ENCODE measurements at regions of chr3 and their contacts with region 1.

Region 1: DNA sequence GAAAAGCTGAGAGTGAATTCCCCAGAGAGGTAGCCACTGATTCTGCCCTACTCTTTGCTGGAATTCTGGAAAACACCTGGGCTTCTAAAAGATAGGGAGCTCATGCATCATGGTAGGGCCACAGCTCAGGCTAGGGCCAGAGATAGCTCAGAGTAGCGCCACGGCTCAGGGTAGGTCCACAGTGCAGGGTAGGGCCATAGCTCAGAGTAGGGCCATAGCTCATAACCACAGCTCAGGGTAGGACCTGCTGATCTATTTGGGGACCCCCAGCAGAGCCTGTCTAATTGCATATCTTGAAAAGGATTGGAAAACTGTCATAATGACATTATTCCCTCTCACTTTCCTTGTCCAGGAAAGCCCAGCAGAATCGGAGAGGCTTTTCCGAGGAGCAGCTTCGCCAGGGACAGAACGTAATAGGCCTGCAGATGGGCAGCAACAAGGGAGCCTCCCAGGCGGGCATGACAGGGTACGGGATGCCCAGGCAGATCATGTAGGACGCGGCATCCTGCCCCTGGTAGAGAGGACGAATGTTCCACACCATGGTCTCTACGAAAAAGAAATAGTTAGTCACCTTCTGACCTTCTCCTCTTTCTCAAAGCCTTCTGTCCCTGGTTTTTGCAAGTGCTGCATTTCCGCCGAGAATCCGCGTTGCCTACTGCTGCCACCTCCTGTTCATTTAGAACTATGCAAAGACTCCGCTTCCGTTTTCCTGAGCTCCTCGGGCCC is 14.5 kb downstream of the TAGLN3 start:
- DNase-seq: peak; percentile 19 to 78 (median 46)
- ATAC-seq: peak; percentile 87
- H3K4me3 ChIP-seq: no peak overlapping the region
- H3K4me3 Mint-ChIP-seq: no peak overlapping the region
- H3K27ac ChIP-seq: no peak overlapping the region
- H3K27ac Mint-ChIP-seq: no peak overlapping the region
- H3K4me1 ChIP-seq: peaks cover 8% of the 10 kb centered on the region
- H3K4me1 Mint-ChIP-seq: peaks cover 10% of the 10 kb centered on the region
- H3K27me3 ChIP-seq: no peaks in the 10 kb centered on the region
- H3K27me3 Mint-ChIP-seq: no peaks in the 10 kb centered on the region
- CTCF ChIP-seq: peak; percentile 82

Region 2: DNA sequence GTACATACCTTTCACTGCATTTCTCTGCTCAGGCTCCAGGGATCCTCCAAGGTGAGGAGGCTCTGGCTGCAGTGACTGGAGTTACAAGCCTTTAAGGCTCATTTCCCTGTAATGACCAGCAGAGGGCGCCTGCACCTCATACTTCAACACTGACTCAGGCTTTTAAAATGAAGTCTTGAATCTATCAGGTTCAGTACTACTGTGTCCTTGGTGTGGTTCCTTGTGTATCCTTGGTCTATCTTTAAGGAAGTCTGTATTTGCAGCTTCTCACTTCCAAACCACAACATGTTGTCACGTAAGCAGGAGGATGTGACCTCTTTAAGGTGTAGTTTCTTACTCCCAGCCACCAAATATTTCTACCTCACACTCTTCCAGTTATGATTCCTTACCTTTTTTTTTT is 295.6 kb before region 1 on chr3:
- CTCF ChIA-PET with region 1: interaction called, 22 read pairs
- POLR2A ChIA-PET with region 1: no interaction called
- intact Hi-C with region 1: loop called (anchors 1 kb)
- DNase-seq: peak; percentile 36 to 85 (median 54)
- ATAC-seq: peak; percentile 96
- H3K4me3 ChIP-seq: no peak overlapping the region
- H3K4me3 Mint-ChIP-seq: no peak overlapping the region
- H3K27ac ChIP-seq: no peak overlapping the region
- H3K27ac Mint-ChIP-seq: no peak overlapping the region
- H3K4me1 ChIP-seq: no peaks in the 10 kb centered on the region
- H3K4me1 Mint-ChIP-seq: no peaks in the 10 kb centered on the region
- H3K27me3 ChIP-seq: no peaks in the 10 kb centered on the region
- H3K27me3 Mint-ChIP-seq: no peaks in the 10 kb centered on the region
- CTCF ChIP-seq: peak; percentile 90

Region 3: GRCh38 chr3:111989061-111989678 is 24.1 kb before region 1 on chr3:
- CTCF ChIA-PET with region 1: interaction called, 23 read pairs
- POLR2A ChIA-PET with region 1: interaction called, 6 read pairs
- intact Hi-C with region 1: loop called in 1 of 2 experiments (anchors 2 kb)
- DNase-seq: peak in 3 of 14 experiments; percentile 54 to 64 (median 61)
- ATAC-seq: peak; percentile 77
- H3K4me3 ChIP-seq: no peak overlapping the region
- H3K4me3 Mint-ChIP-seq: no peak overlapping the region
- H3K27ac ChIP-seq: no peak overlapping the region
- H3K27ac Mint-ChIP-seq: no peak overlapping the region
- H3K4me1 ChIP-seq: no peaks in the 10 kb centered on the region
- H3K4me1 Mint-ChIP-seq: peaks cover 45% of the 10 kb centered on the region
- H3K27me3 ChIP-seq: no peaks in the 10 kb centered on the region
- H3K27me3 Mint-ChIP-seq: no peaks in the 10 kb centered on the region
- CTCF ChIP-seq: peak; percentile 81

Region 4: GRCh38 chr3:111998636-111999483 is 14.4 kb before region 1 on chr3 and contains the start of gene TAGLN3:
- CTCF ChIA-PET with region 1: interaction called, 16 read pairs
- POLR2A ChIA-PET with region 1: interaction called, 4 read pairs
- intact Hi-C with region 1: loop called in 1 of 2 experiments (anchors 2 kb)
- DNase-seq: peak in 1 of 14 experiments; percentile 14
- ATAC-seq: peak; percentile 72
- H3K4me3 ChIP-seq: peak within 1 kb of the TSS; percentile 42
- H3K4me3 Mint-ChIP-seq: peak within 1 kb of the TSS; percentile 88
- H3K27ac ChIP-seq: no peak within 1 kb of the TSS
- H3K27ac Mint-ChIP-seq: no peak within 1 kb of the TSS
- H3K4me1 ChIP-seq: peaks cover 29% of the 10 kb centered on the region
- H3K4me1 Mint-ChIP-seq: peaks cover 42% of the 10 kb centered on the region
- H3K27me3 ChIP-seq: peaks cover 0 to 3% of the 10 kb centered on the region in 2 experiments
- H3K27me3 Mint-ChIP-seq: no peaks in the 10 kb centered on the region
- CTCF ChIP-seq: no peak
- total RNA-seq, gene TAGLN3: 0.28 TPM in 1 of 2 experiments, not detected in the other

Region 5: GRCh38 chr3:112425858-112426750 is 412.9 kb after region 1 on chr3:
- CTCF ChIA-PET with region 1: no interaction called
- POLR2A ChIA-PET with region 1: no interaction called
- intact Hi-C with region 1: no loop called
- DNase-seq: no peak
- ATAC-seq: no peak
- H3K4me3 ChIP-seq: no peak overlapping the region
- H3K4me3 Mint-ChIP-seq: no peak overlapping the region
- H3K27ac ChIP-seq: no peak overlapping the region
- H3K27ac Mint-ChIP-seq: no peak overlapping the region
- H3K4me1 ChIP-seq: no peaks in the 10 kb centered on the region
- H3K4me1 Mint-ChIP-seq: peaks cover 5% of the 10 kb centered on the region
- H3K27me3 ChIP-seq: no peaks in the 10 kb centered on the region
- H3K27me3 Mint-ChIP-seq: no peaks in the 10 kb centered on the region
- CTCF ChIP-seq: no peak

Measured in CD4-positive, alpha-beta T cell (primary cell).